ENCODE measurements at regions of chr10 and their contacts with region 1.

Region 1: GRCh38 chr10:68526626-68527307 is 556 bp downstream of the SLC25A16 start:
- DNase-seq: no peak
- ATAC-seq: no peak
- H3K4me3 ChIP-seq: peak overlapping the region; percentile 70 to 98 (median 92)
- H3K4me3 Mint-ChIP-seq: peak overlapping the region; percentile 87
- H3K27ac ChIP-seq: peak overlapping the region; percentile 86 to 95
- H3K27ac Mint-ChIP-seq: peak overlapping the region; percentile 91
- H3K4me1 ChIP-seq: peaks cover 6 to 13% of the 10 kb centered on the region in 2 donors
- H3K4me1 Mint-ChIP-seq: peaks cover 17% of the 10 kb centered on the region
- H3K27me3 ChIP-seq: no peaks in the 10 kb centered on the region
- H3K27me3 Mint-ChIP-seq: no peaks in the 10 kb centered on the region
- CTCF ChIP-seq: no peak

Region 2: GRCh38 chr10:67772894-67773511 is 753.8 kb before region 1 on chr10:
- CTCF ChIA-PET with region 1: no interaction called
- POLR2A ChIA-PET with region 1: no interaction called
- intact Hi-C with region 1: loop called (anchors 5 kb)
- DNase-seq: peak; percentile 81
- ATAC-seq: peak; percentile 92
- H3K4me3 ChIP-seq: no peak overlapping the region
- H3K4me3 Mint-ChIP-seq: peak overlapping the region; percentile 64
- H3K27ac ChIP-seq: peak overlapping the region; percentile 62 to 78
- H3K27ac Mint-ChIP-seq: peak overlapping the region; percentile 89
- H3K4me1 ChIP-seq: peaks cover 41 to 45% of the 10 kb centered on the region in 2 donors
- H3K4me1 Mint-ChIP-seq: peaks cover 47% of the 10 kb centered on the region
- H3K27me3 ChIP-seq: no peaks in the 10 kb centered on the region
- H3K27me3 Mint-ChIP-seq: no peaks in the 10 kb centered on the region
- CTCF ChIP-seq: no peak

Region 3: GRCh38 chr10:67978749-67979148 is 548.0 kb before region 1 on chr10:
- CTCF ChIA-PET with region 1: no interaction called
- POLR2A ChIA-PET with region 1: interaction called, 10 read pairs
- intact Hi-C with region 1: no loop called
- DNase-seq: no peak
- ATAC-seq: no peak
- H3K4me3 ChIP-seq: no peak overlapping the region
- H3K4me3 Mint-ChIP-seq: no peak overlapping the region
- H3K27ac ChIP-seq: no peak overlapping the region
- H3K27ac Mint-ChIP-seq: no peak overlapping the region
- H3K4me1 ChIP-seq: no peaks in the 10 kb centered on the region
- H3K4me1 Mint-ChIP-seq: no peaks in the 10 kb centered on the region
- H3K27me3 ChIP-seq: no peaks in the 10 kb centered on the region
- H3K27me3 Mint-ChIP-seq: no peaks in the 10 kb centered on the region
- CTCF ChIP-seq: no peak

Region 4: GRCh38 chr10:68406815-68407548 is 119.8 kb before region 1 on chr10 and contains the start of gene RUFY2:
- CTCF ChIA-PET with region 1: no interaction called
- POLR2A ChIA-PET with region 1: no interaction called
- intact Hi-C with region 1: loop called (anchors 1 kb)
- DNase-seq: peak; percentile 91
- ATAC-seq: peak; percentile 93
- H3K4me3 ChIP-seq: peak within 1 kb of the TSS; percentile 79 to 94 (median 91)
- H3K4me3 Mint-ChIP-seq: peak within 1 kb of the TSS; percentile 92
- H3K27ac ChIP-seq: peak within 1 kb of the TSS; percentile 51 to 83
- H3K27ac Mint-ChIP-seq: peak within 1 kb of the TSS; percentile 89
- H3K4me1 ChIP-seq: peaks cover 6 to 9% of the 10 kb centered on the region in 2 donors
- H3K4me1 Mint-ChIP-seq: peaks cover 22% of the 10 kb centered on the region
- H3K27me3 ChIP-seq: no peaks in the 10 kb centered on the region
- H3K27me3 Mint-ChIP-seq: no peaks in the 10 kb centered on the region
- CTCF ChIP-seq: peak; percentile 73
- total RNA-seq, gene RUFY2: 38.7 and 41.6 TPM in 2 replicates

Region 5: GRCh38 chr10:68471586-68472408 is 55.0 kb before region 1 on chr10 and contains the start of gene DNA2:
- CTCF ChIA-PET with region 1: no interaction called
- POLR2A ChIA-PET with region 1: no interaction called
- intact Hi-C with region 1: loop called (anchors 5 kb)
- DNase-seq: peak; percentile 86
- ATAC-seq: peak; percentile 84
- H3K4me3 ChIP-seq: peak within 1 kb of the TSS; percentile 73 to 88 (median 77)
- H3K4me3 Mint-ChIP-seq: peak within 1 kb of the TSS; percentile 100
- H3K27ac ChIP-seq: peak within 1 kb of the TSS in 1 of 2 donors; percentile 76
- H3K27ac Mint-ChIP-seq: peak within 1 kb of the TSS; percentile 92
- H3K4me1 ChIP-seq: peaks cover 5 to 12% of the 10 kb centered on the region in 2 donors
- H3K4me1 Mint-ChIP-seq: peaks cover 17% of the 10 kb centered on the region
- H3K27me3 ChIP-seq: no peaks in the 10 kb centered on the region
- H3K27me3 Mint-ChIP-seq: no peaks in the 10 kb centered on the region
- CTCF ChIP-seq: no peak
- total RNA-seq, gene DNA2: 5.6 and 6.5 TPM in 2 replicates